K562 (cell line): ENCODE measurements at regions of chr5 and their contacts with region 1.

Region 1: DNA sequence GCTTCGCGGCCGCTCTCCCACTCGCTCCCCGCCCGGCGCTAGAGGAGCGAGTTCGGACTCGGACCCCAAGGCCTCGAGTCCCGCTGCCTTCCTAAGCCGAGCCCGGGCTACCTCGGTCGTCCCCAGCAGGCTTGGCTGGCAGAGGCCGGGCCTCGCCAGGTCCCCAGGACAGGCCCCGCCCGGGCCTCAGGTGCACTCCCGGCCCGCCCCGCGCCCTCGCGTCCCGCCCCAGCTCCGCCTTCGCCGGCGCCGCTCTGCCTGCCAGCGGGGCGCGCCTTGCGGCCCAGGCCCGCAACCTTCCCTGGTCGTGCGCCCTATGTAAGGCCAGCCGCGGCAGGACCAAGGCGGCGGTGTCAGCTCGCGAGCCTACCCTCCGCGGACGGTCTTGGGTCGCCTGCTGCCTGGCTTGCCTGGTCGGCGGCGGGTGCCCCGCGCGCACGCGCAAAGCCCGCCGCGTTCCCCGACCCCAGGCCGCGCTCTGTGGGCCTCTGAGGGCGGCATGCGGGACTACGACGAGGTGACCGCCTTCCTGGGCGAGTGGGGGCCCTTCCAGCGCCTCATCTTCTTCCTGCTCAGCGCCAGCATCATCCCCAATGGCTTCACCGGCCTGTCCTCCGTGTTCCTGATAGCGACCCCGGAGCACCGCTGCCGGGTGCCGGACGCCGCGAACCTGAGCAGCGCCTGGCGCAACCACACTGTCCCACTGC is at the start of gene SLC22A5:
- DNase-seq: peak; percentile 83 to 86 (median 84)
- ATAC-seq: peak; percentile 91
- H3K4me3 ChIP-seq: peak within 1 kb of the TSS; percentile 66
- H3K27ac ChIP-seq: peak within 1 kb of the TSS; percentile 78
- H3K4me1 ChIP-seq: peaks cover 16 to 26% of the 10 kb centered on the region in 2 experiments; a peak in 4 of 5 replicates
- H3K27me3 ChIP-seq: no peaks in the 10 kb centered on the region
- CTCF ChIP-seq: no peak
- EP300 ChIP-seq: no peak
- POLR2A ChIP-seq: peak; percentile 73
- RAD21 ChIP-seq: no peak
- polyA plus RNA-seq, gene SLC22A5: 3.0 to 3.3 TPM

Region 2: GRCh38 chr5:132272311-132273210 is 97.1 kb before region 1 on chr5:
- CTCF ChIA-PET with region 1: no interaction called
- POLR2A ChIA-PET with region 1: interaction called, 3 read pairs
- in situ Hi-C with region 1: no loop called
- intact Hi-C with region 1: loop called (anchors 2 kb)
- DNase-seq: peak; percentile 59 to 85 (median 65)
- ATAC-seq: peak; percentile 82
- H3K4me3 ChIP-seq: no peak overlapping the region
- H3K27ac ChIP-seq: no peak overlapping the region
- H3K4me1 ChIP-seq: peaks cover 12 to 41% of the 10 kb centered on the region in 2 experiments; a peak in 4 of 5 replicates
- H3K27me3 ChIP-seq: no peaks in the 10 kb centered on the region
- CTCF ChIP-seq: peak; percentile 82 to 89 (median 84)
- EP300 ChIP-seq: no peak
- POLR2A ChIP-seq: no peak
- RAD21 ChIP-seq: peak; percentile 62 to 89

Region 3: GRCh38 chr5:132293066-132293991 is 76.3 kb before region 1 on chr5:
- CTCF ChIA-PET with region 1: no interaction called
- POLR2A ChIA-PET with region 1: interaction called, 5 read pairs
- in situ Hi-C with region 1: no loop called
- intact Hi-C with region 1: loop called (anchors 5 kb)
- DNase-seq: peak; percentile 86 to 96 (median 90)
- ATAC-seq: peak; percentile 67
- H3K4me3 ChIP-seq: peak overlapping the region; percentile 61
- H3K27ac ChIP-seq: peak overlapping the region; percentile 96
- H3K4me1 ChIP-seq: peaks cover 35 to 46% of the 10 kb centered on the region in 2 experiments; a peak in 4 of 5 replicates
- H3K27me3 ChIP-seq: no peaks in the 10 kb centered on the region
- CTCF ChIP-seq: peak in 2 of 3 experiments; percentile 21 to 22; a peak in 2 of 6 replicates
- EP300 ChIP-seq: peak; percentile 2; the same call in 1 of the 2 replicates
- POLR2A ChIP-seq: no peak; the same call in 1 of the 2 replicates
- RAD21 ChIP-seq: peak; percentile 9 to 30; a peak in 1 of 4 replicates

Region 4: DNA sequence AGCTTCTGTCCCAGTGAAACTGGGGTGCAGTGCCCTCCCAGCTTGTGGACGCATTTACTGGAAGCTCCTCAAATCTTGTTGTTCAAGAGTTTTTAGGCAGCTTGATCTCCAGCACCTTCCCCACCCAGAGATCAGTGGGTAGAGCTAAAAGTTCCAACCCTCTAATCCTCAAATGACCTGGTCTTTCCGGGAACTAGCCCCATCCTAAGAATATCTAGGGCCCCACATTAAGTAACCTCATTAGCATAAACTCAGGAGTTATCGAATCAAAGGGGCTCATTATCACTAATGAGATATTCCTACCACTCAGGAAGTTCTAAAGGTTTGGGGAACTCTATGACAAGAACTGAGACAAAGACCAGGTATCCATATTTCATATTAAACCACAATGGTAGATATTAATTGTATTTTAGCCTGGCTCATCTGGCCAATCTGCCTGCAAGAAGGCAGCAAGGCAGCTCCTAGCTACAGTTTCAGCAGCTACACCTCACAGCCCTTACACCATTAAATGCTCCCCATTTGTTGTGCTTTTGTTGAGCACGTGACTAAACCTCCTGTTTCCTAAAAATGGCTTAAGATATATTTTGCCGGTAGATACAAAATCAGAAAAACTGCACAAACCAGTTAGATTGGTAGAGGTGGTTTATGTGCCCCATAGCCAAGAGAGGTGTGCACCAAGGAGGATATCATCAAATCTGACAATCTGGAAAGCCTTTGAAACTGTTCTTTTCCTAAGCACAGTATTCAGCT is 24.7 kb before region 1 on chr5:
- CTCF ChIA-PET with region 1: no interaction called
- POLR2A ChIA-PET with region 1: interaction called, 11 read pairs
- in situ Hi-C with region 1: no loop called
- intact Hi-C with region 1: no loop called
- DNase-seq: peak in 2 of 4 experiments; percentile 49 to 52
- ATAC-seq: peak; percentile 73
- H3K4me3 ChIP-seq: no peak overlapping the region
- H3K27ac ChIP-seq: peak overlapping the region; percentile 12; the same call in 2 of the 3 replicates
- H3K4me1 ChIP-seq: peaks cover 0 to 26% of the 10 kb centered on the region in 2 experiments; a peak in 4 of 5 replicates
- H3K27me3 ChIP-seq: no peaks in the 10 kb centered on the region
- CTCF ChIP-seq: no peak
- EP300 ChIP-seq: no peak
- POLR2A ChIP-seq: no peak
- RAD21 ChIP-seq: no peak

Region 5: DNA sequence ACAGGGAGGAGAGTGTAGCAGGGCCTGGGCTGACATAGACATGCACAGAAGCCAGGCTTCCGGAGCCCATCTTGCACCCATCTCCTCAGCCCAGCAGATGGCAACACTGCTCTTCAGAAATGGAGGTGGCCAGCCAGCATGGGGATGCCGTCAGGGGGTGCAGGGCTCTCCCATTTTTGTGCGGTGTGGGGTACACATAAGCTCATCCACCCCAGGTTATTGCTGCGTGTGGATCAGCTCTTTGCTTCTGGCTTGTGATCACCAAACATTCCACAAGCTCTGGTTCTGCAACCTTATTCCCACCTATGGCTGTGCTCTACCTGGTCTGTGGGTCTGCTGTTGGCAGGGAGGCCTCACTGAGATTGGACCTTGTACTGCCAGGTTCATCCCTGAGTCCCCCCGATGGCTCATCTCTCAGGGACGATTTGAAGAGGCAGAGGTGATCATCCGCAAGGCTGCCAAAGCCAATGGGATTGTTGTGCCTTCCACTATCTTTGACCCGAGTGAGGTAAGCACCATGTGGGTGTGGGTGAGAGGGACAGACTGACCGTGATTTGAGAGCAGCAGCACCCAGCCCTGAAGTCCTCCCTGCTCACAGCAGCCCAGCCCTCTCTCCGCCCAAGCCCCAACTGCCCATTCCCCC is 17.1 kb after region 1 on chr5:
- CTCF ChIA-PET with region 1: no interaction called
- POLR2A ChIA-PET with region 1: interaction called, 12 read pairs
- in situ Hi-C with region 1: no loop called
- intact Hi-C with region 1: no loop called
- DNase-seq: peak; percentile 51 to 74 (median 67)
- ATAC-seq: peak; percentile 96
- H3K4me3 ChIP-seq: no peak overlapping the region
- H3K27ac ChIP-seq: no peak overlapping the region
- H3K4me1 ChIP-seq: peaks cover 10 to 12% of the 10 kb centered on the region in 2 experiments; a peak in 3 of 5 replicates
- H3K27me3 ChIP-seq: no peaks in the 10 kb centered on the region
- CTCF ChIP-seq: peak; percentile 81 to 87 (median 82)
- EP300 ChIP-seq: no peak
- POLR2A ChIP-seq: no peak
- RAD21 ChIP-seq: peak; percentile 92 to 95